ENCODE measurements at regions of chr5 and their contacts with region 1.

Region 1: DNA sequence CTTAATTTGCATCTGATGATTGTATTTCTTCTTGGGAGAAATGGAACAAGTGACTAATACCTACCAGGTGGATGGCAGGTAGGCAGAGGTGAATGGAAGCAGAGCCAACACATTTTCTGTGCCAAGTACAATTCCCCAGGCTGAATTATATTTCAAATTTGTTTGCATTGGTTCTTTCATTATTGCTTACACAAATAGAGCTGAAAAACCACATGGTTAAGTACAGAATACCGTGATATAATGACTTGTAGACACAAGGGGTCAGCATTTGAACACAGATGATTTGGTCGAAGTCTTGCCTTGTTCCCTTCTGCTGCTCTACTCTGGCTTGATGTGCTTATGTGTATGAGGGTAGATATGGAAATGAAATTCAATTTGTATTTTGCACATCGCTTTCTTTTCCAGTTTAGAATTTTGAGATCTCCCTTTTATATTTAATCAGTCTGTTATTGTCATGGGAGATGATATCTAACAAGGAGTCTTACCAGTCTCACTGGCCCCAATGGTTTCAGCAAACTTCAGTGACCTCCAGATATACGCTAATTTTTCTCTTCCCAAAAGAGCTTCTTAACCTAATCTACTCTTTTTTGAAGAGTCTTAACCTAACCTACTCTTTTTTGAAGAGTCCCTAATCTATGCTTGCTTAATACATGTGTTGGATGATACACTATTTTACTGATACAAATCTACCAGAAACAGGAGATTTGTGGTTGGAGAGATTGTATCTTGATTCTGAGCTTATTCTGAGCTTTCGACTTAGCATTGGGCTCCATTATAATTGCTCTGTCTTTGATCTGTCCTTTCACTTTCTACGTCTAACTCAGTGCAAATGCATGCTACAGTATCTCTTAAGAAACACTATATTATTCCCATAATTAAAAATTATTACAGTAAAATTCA is 88.1 kb downstream of the PCSK1 start:
- DNase-seq: peak; percentile 88
- H3K4me3 ChIP-seq: no peak overlapping the region
- H3K27ac ChIP-seq: no peak overlapping the region
- H3K4me1 ChIP-seq: peaks cover 25% of the 10 kb centered on the region
- H3K27me3 ChIP-seq: no peaks in the 10 kb centered on the region
- CTCF ChIP-seq: peak; percentile 42 to 47
- POLR2A ChIP-seq: no peak

Region 2: DNA sequence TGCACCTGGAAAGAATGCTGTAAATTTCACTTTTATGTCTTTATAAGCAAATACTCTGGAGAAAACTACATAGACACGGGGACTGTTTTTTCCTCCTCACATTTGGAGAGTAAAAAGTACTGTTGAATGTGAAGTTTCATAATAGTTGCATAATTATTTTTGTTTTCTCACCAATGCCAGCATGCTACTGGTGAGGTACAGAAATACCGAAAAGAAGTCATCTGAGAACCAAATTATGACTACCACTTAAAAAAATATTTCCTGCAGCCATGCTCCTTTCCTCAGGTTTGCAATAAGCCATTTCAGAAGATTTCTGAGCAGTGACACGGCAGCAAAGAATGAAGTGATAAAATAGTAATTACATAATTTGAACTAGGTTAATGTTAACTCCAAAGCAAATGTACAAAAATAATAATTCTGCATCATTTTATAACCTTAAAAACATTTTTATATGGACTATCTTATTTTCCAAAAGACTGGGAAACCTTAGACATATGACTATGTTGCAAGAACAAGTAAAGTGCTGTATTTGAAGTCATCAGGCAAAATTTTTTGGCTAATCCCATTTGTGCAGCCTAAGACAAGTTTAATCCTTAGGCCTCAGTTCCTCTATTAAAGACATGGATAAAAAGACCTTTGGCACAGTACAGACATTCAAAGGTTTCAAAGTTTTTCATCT is 56.6 kb before region 1 on chr5:
- CTCF ChIA-PET with region 1: no interaction called
- POLR2A ChIA-PET with region 1: no interaction called
- dilution Hi-C with region 1: no loop called
- intact Hi-C with region 1: no loop called
- DNase-seq: no peak
- H3K4me3 ChIP-seq: no peak overlapping the region
- H3K27ac ChIP-seq: no peak overlapping the region
- H3K4me1 ChIP-seq: no peaks in the 10 kb centered on the region
- H3K27me3 ChIP-seq: no peaks in the 10 kb centered on the region
- CTCF ChIP-seq: no peak
- POLR2A ChIP-seq: no peak

Region 3: DNA sequence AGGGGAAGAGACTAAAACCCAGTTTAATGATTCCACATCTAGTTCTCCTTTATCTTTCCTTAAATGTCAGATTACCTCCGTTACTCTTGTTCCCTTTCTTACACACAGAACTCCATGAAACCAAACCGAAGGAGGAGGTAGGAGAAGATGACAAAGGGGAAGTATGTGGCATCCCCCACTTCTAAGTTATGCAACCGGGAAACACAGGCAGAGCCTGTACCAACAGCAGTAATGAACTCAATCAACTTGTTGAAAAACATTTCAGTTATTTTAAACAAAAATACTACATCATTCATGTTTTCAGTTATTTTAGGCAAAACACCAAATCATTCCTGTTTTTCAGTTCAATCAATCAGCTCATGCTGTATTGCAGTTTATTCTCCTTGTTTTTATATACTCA is 13.7 kb before region 1 on chr5:
- CTCF ChIA-PET with region 1: no interaction called
- POLR2A ChIA-PET with region 1: no interaction called
- dilution Hi-C with region 1: no loop called
- intact Hi-C with region 1: no loop called
- DNase-seq: peak; percentile 57
- H3K4me3 ChIP-seq: no peak overlapping the region
- H3K27ac ChIP-seq: no peak overlapping the region
- H3K4me1 ChIP-seq: peaks cover 3% of the 10 kb centered on the region
- H3K27me3 ChIP-seq: no peaks in the 10 kb centered on the region
- CTCF ChIP-seq: no peak
- POLR2A ChIP-seq: no peak

Region 4: DNA sequence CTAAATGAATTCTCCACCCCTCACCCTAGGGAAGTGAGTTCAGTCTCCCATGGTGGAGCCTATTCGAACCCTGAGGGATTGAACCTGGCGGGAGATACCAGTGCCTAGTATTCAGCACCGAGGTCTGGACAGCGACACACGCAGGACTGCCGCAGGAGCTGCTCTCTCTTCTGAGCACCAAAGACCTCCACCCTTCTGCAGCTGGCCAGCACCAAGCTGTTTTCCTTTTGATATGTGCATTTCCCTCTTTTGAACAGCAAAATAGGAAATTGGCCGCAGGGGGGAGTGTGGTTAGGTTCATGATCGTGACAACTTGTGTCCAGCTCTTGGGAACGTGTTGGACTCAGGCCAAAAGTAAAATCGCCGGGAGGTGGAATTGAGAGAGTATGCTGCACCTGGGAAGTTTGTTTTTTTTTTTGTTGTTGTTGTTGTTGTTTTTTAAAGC is 89.3 kb after region 1 on chr5:
- CTCF ChIA-PET with region 1: interaction called, 45 read pairs
- POLR2A ChIA-PET with region 1: no interaction called
- dilution Hi-C with region 1: no loop called
- intact Hi-C with region 1: loop called (anchors 2 kb)
- DNase-seq: peak; percentile 75
- H3K4me3 ChIP-seq: no peak overlapping the region
- H3K27ac ChIP-seq: no peak overlapping the region
- H3K4me1 ChIP-seq: peaks cover 22% of the 10 kb centered on the region
- H3K27me3 ChIP-seq: peaks cover 27 to 34% of the 10 kb centered on the region in 2 experiments
- CTCF ChIP-seq: peak in 1 of 2 donors; percentile 10
- POLR2A ChIP-seq: no peak

Region 5: DNA sequence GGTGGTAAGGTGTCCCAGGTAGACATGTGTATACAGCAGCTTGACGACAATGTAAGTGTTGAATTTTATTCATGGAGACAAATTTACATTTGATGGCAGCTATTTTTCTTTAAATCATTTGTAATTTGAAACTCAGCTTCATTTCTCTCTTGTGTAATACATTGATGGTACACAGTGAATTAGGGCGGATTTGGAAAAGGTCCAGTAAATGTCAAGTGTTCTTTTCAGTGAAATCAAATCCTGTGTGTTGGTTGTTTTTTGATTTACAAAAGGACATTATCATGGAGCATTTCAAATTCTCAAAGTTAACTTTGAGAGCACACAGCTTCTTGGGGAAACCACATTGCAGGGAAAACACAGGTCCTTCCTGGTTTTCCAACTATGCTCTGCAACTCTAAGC is 118.2 kb after region 1 on chr5:
- CTCF ChIA-PET with region 1: no interaction called
- POLR2A ChIA-PET with region 1: no interaction called
- dilution Hi-C with region 1: no loop called
- intact Hi-C with region 1: no loop called
- DNase-seq: peak; percentile 43
- H3K4me3 ChIP-seq: no peak overlapping the region
- H3K27ac ChIP-seq: no peak overlapping the region
- H3K4me1 ChIP-seq: no peaks in the 10 kb centered on the region
- H3K27me3 ChIP-seq: no peaks in the 10 kb centered on the region
- CTCF ChIP-seq: no peak
- POLR2A ChIP-seq: no peak

Region 6: GRCh38 chr5:96565582-96566265 is 220.8 kb after region 1 on chr5:
- CTCF ChIA-PET with region 1: interaction called, 7 read pairs
- POLR2A ChIA-PET with region 1: no interaction called
- dilution Hi-C with region 1: no loop called
- intact Hi-C with region 1: loop called (anchors 1 kb)
- DNase-seq: peak; percentile 79
- H3K4me3 ChIP-seq: no peak overlapping the region
- H3K27ac ChIP-seq: peak overlapping the region; percentile 97
- H3K4me1 ChIP-seq: peaks cover 71% of the 10 kb centered on the region
- H3K27me3 ChIP-seq: no peaks in the 10 kb centered on the region
- CTCF ChIP-seq: no peak
- POLR2A ChIP-seq: no peak

Region 7: GRCh38 chr5:96595300-96596090 is 250.6 kb after region 1 on chr5:
- CTCF ChIA-PET with region 1: interaction called, 158 read pairs
- POLR2A ChIA-PET with region 1: no interaction called
- dilution Hi-C with region 1: no loop called
- intact Hi-C with region 1: no loop called
- DNase-seq: peak; percentile 80
- H3K4me3 ChIP-seq: no peak overlapping the region
- H3K27ac ChIP-seq: peak overlapping the region; percentile 79
- H3K4me1 ChIP-seq: peaks cover 79% of the 10 kb centered on the region
- H3K27me3 ChIP-seq: no peaks in the 10 kb centered on the region
- CTCF ChIP-seq: peak; percentile 19 to 56
- POLR2A ChIP-seq: no peak

Region 8: GRCh38 chr5:96662725-96663513 is 318.0 kb after region 1 on chr5:
- CTCF ChIA-PET with region 1: interaction called, 12 read pairs
- POLR2A ChIA-PET with region 1: no interaction called
- dilution Hi-C with region 1: no loop called
- intact Hi-C with region 1: no loop called
- DNase-seq: peak; percentile 90
- H3K4me3 ChIP-seq: peak overlapping the region; percentile 49 to 86 (median 84)
- H3K27ac ChIP-seq: peak overlapping the region; percentile 23
- H3K4me1 ChIP-seq: peaks cover 17% of the 10 kb centered on the region
- H3K27me3 ChIP-seq: no peaks in the 10 kb centered on the region
- CTCF ChIP-seq: no peak
- POLR2A ChIP-seq: peak; percentile 60

Region 9: DNA sequence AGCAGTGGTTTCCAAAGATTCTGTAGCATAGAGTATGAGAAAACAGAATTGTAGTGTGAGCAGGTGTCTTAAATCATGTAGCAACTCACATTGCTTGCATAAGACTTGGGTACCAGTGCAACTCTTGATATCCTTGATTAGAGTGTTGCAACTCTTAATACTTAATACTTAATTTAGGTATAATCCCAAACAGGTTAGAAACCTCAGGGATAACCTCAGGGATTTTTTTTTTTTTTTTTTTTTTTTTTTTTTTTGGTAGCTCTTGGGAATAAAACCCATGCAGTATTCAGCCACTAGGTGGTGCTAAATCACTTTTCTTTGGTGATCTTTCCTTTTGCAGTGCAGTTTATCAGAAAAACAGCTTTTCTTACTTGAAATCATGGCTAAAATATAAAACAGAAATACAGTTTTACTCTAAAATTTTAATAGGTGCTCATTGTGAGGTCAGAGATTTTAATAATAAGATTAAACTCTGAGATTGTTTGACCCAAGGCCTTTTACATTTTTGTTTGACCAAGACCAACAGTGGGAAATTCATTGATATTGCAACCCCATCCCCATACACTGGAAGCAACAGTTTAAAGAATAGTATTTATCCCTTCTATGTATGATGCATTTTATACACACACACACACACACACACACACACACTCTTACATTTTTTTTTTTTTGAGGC is 407.6 kb after region 1 on chr5:
- CTCF ChIA-PET with region 1: interaction called, 36 read pairs
- POLR2A ChIA-PET with region 1: no interaction called
- dilution Hi-C with region 1: no loop called
- intact Hi-C with region 1: loop called (anchors 5 kb)
- DNase-seq: peak; percentile 71
- H3K4me3 ChIP-seq: no peak overlapping the region
- H3K27ac ChIP-seq: no peak overlapping the region
- H3K4me1 ChIP-seq: peaks cover 3% of the 10 kb centered on the region
- H3K27me3 ChIP-seq: no peaks in the 10 kb centered on the region
- CTCF ChIP-seq: peak; percentile 36 to 55
- POLR2A ChIP-seq: no peak

Measured in endothelial cell of umbilical vein (primary cell).